ENCODE measurements at regions of chr1 and their contacts with region 1.

Region 1: DNA sequence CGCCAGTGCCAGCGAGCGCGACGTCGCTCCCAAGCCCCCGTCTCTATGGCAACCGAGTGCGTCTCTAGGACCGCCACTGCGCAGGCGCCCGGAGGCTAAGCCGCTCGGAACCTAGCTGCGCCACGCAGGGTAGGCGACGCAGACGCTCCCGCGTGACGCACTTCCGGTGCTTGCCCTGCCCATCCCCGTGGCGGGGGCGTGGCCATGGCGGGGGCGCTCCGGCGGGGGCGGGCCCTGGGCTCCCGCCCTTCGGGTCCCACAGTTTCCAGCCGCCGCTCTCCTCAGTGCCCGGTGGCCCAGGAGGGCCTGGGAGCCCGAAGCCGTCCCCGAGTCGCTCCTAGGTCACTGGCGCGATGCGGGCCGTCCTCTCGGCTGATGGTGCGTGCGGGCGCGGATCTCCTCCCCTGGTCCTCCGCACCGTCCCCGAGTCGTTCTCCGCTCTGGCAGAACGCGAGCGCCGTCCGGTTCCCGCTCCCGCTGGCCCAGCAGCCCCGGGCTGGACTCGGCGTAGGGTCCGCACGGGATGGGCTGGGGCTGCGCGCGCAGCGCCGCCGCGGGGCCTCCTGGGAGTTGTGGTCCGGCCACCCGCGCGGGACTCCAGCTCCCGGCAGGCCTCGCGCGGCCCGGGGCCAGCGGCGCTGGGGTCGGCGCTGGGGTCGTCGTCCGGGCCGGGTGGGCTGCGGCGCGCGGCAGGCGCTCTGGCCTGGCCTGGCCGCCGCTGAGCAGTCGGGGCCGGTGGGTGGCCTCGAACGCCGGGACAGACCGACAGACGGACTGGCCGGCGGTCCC is at the start of gene MIB2:
- DNase-seq: peak; percentile 95
- H3K4me3 Mint-ChIP-seq: peak within 1 kb of the TSS; percentile 90
- H3K27ac Mint-ChIP-seq: peak within 1 kb of the TSS; percentile 85
- H3K4me1 Mint-ChIP-seq: peaks cover 24% of the 10 kb centered on the region
- H3K27me3 Mint-ChIP-seq: no peaks in the 10 kb centered on the region
- total RNA-seq, gene MIB2: 27.6 to 31.7 TPM

Region 2: DNA sequence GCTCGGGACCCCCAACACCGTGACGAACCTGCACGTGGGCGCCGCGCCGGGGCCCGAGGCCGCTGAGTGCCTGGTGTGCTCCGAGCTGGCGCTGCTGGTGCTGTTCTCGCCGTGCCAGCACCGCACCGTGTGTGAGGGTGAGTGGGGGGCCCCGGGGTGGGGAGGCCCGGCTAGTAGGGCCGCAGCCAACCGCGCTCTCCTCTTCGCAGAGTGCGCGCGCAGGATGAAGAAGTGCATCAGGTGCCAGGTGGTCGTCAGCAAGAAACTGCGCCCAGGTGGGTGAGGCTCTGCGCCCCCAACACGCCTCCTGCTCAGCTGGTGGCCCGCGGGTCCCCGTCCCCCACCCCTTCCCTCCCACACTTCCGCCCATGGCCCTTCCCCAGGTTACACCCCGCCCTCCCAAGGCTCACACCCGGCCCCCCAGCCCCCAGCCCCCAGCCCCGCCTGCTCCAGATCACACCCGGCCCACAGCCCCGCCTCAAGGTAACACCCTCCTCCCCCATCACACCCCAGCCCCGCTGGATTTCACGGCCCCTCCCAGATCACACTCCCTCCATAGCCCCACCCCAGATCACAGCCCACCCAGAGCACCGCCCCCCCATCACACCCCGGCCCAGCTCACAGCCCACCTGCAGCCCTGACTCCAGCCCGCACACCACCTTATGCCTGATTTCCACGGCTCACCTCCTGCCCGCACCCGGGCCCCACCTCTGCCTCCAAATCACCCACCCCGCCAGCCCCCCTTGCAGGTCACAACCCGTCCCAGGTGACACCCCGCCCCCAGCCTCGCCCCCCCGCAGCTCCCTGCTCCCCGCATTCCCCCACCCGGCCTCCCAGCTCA is 14.2 kb after region 1 on chr1:
- CTCF ChIA-PET with region 1: interaction called, 4 read pairs
- intact Hi-C with region 1: loop called (anchors 2 kb)
- DNase-seq: peak; percentile 41
- H3K4me3 Mint-ChIP-seq: peak overlapping the region; percentile 42
- H3K27ac Mint-ChIP-seq: no peak overlapping the region
- H3K4me1 Mint-ChIP-seq: peaks cover 4% of the 10 kb centered on the region
- H3K27me3 Mint-ChIP-seq: peaks cover 4% of the 10 kb centered on the region

Measured in activated naive CD4-positive, alpha-beta T cell treated with anti-CD3 and anti-CD28 coated beads for 36 hours (primary cell).